ENCODE measurements at regions of chr12 and their contacts with region 1.

Region 1: GRCh38 chr12:53746592-53747092 is 5.1 kb downstream of the CISTR start:
- DNase-seq: peak; percentile 50
- H3K4me3 ChIP-seq: no peak overlapping the region
- H3K27me3 ChIP-seq: peaks cover 57% of the 10 kb centered on the region
- CTCF ChIP-seq: peak; percentile 100

Region 2: GRCh38 chr12:53675651-53676453 is 70.8 kb before region 1 on chr12 and contains the start of gene ATP5MC2:
- CTCF ChIA-PET with region 1: interaction called, 29 read pairs
- POLR2A ChIA-PET with region 1: no interaction called
- DNase-seq: peak; percentile 96
- H3K4me3 ChIP-seq: peak within 1 kb of the TSS; percentile 76
- H3K27me3 ChIP-seq: no peaks in the 10 kb centered on the region
- CTCF ChIP-seq: peak; percentile 99
- polyA plus RNA-seq, gene ATP5MC2: 356 and 381 TPM in 2 replicates

Region 3: GRCh38 chr12:53701518-53702260 is 45.0 kb before region 1 on chr12:
- CTCF ChIA-PET with region 1: interaction called, 324 read pairs
- POLR2A ChIA-PET with region 1: no interaction called
- DNase-seq: no peak
- H3K4me3 ChIP-seq: no peak overlapping the region
- H3K27me3 ChIP-seq: peaks cover 28% of the 10 kb centered on the region
- CTCF ChIP-seq: peak; percentile 96

Region 4: DNA sequence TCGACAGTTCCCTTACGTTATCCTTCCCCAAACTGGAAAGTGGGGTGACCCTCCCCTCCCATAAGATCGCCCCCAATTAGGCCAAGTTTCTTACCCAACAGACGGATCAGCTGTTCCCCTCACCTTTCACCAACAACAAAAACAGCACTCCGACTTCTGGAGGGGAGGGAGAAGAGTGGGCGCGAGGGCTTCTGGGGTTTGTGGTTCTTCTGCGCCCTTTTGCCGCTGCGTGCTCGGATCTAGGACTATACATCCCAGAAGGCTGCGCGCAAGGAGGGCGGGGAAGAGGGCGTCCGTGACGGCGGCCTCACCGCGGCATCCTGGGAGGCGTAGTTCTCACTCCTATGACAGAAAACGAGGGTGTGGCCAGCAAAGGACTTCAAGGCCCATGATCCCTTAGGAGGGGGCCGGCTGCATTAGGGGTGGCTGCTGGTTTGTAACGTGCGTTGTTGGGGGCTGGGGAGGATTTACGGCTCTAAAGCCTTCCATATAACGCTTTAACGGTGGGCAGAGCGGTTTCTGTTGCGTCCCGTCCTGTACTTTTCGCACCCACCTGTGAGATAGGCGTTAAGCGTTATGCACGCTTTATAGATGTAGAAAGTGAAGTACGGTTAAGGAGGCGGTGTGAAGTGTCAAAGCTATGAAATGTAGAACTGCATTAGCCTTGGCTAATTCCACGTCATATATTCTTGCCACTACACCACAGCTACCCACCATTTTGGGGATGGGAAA is 19.2 kb before region 1 on chr12 and contains the start of gene CALCOCO1:
- CTCF ChIA-PET with region 1: interaction called, 263 read pairs
- POLR2A ChIA-PET with region 1: no interaction called
- DNase-seq: peak; percentile 96
- H3K4me3 ChIP-seq: peak within 1 kb of the TSS; percentile 86
- H3K27me3 ChIP-seq: no peaks in the 10 kb centered on the region; the same call in 1 of the 2 replicates
- CTCF ChIP-seq: no peak
- polyA plus RNA-seq, gene CALCOCO1: 170 and 206 TPM in 2 replicates

Region 5: GRCh38 chr12:53770281-53770680 is 23.6 kb after region 1 on chr12:
- CTCF ChIA-PET with region 1: interaction called, 10 read pairs
- POLR2A ChIA-PET with region 1: no interaction called
- DNase-seq: peak; percentile 96
- H3K4me3 ChIP-seq: no peak overlapping the region
- H3K27me3 ChIP-seq: no peaks in the 10 kb centered on the region
- CTCF ChIP-seq: no peak

Region 6: DNA sequence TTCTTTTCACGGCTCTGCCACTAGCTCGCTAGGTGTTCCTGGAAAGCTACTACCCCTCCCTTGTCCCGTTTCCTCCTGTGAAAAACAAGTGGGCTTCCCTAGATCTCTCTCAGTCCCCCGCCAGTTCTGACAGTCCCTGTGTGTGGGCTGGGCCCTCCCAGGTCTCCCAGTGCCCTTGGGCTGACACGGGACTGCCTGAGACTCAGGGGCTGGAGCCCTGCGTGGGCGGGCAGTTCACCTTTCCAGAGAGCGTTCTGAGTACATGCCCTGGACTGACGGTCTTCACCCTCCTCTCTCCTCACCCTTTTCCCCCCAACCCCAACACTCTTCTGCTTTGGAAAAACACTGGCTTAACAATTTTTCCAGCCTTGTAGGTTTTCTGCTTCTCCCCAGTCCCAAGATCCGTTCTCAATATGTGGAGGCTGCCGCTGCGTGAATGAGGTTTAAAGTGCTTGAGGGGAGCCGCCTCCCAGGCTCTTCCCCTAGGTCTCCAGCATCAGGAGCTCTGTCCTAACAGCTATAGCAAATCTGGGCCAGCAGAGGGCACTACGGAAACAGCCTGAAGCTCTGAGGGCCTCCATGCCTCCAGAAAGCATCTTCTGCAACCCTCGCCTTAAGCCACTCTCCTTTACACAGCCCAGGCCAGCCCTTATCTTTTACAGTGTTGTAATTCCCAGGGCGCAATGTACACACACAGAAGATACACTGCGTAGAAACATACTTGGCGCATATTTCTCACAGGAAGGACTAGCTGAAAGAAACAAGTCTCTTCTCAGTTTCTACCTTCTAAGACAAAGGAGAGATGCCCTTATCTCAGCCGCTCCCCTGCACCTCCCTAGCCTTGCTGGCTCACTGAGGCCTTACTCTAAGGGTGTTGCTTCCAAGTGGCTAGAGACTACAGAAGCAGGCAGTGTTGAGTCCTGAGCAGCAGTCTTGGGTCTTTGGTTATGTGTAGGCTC is 911.9 kb after region 1 on chr12:
- CTCF ChIA-PET with region 1: no interaction called
- POLR2A ChIA-PET with region 1: no interaction called
- DNase-seq: no peak
- H3K4me3 ChIP-seq: no peak overlapping the region
- H3K27me3 ChIP-seq: peaks cover 1% of the 10 kb centered on the region; the same call in 1 of the 2 replicates
- CTCF ChIP-seq: peak; percentile 53

Measured in BJ (cell line).